ENCODE measurements at regions of chr17 and their contacts with region 1.

Region 1: GRCh38 chr17:78250891-78251794 is 19.7 kb downstream of the TMEM235 start:
- DNase-seq: peak; percentile 89
- ATAC-seq: peak; percentile 69
- H3K4me3 ChIP-seq: no peak overlapping the region
- H3K4me3 Mint-ChIP-seq: peak overlapping the region; percentile 57
- H3K27ac ChIP-seq: no peak overlapping the region
- H3K27ac Mint-ChIP-seq: peak overlapping the region; percentile 59
- H3K4me1 ChIP-seq: peaks cover 33 to 40% of the 10 kb centered on the region in 2 donors
- H3K4me1 Mint-ChIP-seq: peaks cover 33% of the 10 kb centered on the region
- H3K27me3 ChIP-seq: no peaks in the 10 kb centered on the region
- H3K27me3 Mint-ChIP-seq: no peaks in the 10 kb centered on the region
- CTCF ChIP-seq: peak; percentile 100

Region 2: GRCh38 chr17:78082988-78083387 is 168.2 kb before region 1 on chr17:
- CTCF ChIA-PET with region 1: interaction called, 47 read pairs
- POLR2A ChIA-PET with region 1: no interaction called
- intact Hi-C with region 1: loop called (anchors 1 kb)
- DNase-seq: no peak
- ATAC-seq: no peak
- H3K4me3 ChIP-seq: no peak overlapping the region
- H3K4me3 Mint-ChIP-seq: no peak overlapping the region
- H3K27ac ChIP-seq: no peak overlapping the region
- H3K27ac Mint-ChIP-seq: no peak overlapping the region
- H3K4me1 ChIP-seq: no peaks in the 10 kb centered on the region
- H3K4me1 Mint-ChIP-seq: no peaks in the 10 kb centered on the region
- H3K27me3 ChIP-seq: no peaks in the 10 kb centered on the region
- H3K27me3 Mint-ChIP-seq: no peaks in the 10 kb centered on the region
- CTCF ChIP-seq: no peak

Region 3: DNA sequence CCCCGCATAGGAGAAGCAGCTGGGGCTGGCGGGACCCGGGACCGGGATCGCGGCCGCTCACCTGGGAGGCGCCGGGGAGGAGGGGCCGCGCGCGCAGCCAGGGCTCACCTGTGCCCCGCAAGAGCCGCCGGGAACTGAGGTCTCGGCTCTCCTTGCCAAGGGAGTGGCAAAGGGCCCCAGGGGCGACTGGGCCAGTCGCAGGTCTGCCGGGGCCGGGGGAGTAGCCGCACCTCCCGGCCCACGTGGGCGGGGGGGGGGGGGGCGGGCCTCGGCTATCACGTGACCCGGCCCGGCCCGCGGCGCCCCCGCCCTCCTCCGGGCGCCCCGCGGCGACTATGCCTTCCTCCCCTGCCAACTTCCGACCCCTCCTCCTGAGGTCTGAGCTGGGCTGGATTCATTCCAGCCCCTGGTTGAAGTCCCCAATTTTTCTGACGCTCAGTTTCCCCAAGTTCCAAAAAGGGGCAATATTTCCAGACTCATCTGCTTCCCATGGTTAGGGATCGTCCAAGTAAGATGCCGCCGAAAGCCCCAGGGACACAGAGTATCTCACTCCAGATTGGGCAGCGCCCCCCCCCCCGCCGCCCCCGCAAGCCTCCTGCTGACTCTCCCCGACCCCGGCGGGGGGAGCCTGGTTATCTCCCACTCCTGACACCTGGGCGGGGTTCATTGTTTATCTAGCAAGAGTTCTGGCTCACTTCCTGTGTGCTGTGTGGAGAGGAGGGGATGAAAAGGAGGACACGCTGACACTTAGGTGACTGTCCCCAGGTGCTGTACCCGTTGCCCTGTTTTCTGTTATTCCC is 122.4 kb before region 1 on chr17 and contains the start of gene TMC6:
- CTCF ChIA-PET with region 1: interaction called, 30 read pairs
- POLR2A ChIA-PET with region 1: interaction called, 7 read pairs
- intact Hi-C with region 1: loop called (anchors 5 kb)
- DNase-seq: peak; percentile 88
- ATAC-seq: peak; percentile 21
- H3K4me3 ChIP-seq: peak within 1 kb of the TSS; percentile 38 to 97 (median 89)
- H3K4me3 Mint-ChIP-seq: peak within 1 kb of the TSS; percentile 96
- H3K27ac ChIP-seq: peak within 1 kb of the TSS; percentile 88 to 92
- H3K27ac Mint-ChIP-seq: peak within 1 kb of the TSS; percentile 99
- H3K4me1 ChIP-seq: peaks cover 68 to 80% of the 10 kb centered on the region in 2 donors
- H3K4me1 Mint-ChIP-seq: peaks cover 73% of the 10 kb centered on the region
- H3K27me3 ChIP-seq: no peaks in the 10 kb centered on the region
- H3K27me3 Mint-ChIP-seq: no peaks in the 10 kb centered on the region
- CTCF ChIP-seq: no peak
- total RNA-seq, gene TMC6: 891 and 910 TPM in 2 replicates

Region 4: DNA sequence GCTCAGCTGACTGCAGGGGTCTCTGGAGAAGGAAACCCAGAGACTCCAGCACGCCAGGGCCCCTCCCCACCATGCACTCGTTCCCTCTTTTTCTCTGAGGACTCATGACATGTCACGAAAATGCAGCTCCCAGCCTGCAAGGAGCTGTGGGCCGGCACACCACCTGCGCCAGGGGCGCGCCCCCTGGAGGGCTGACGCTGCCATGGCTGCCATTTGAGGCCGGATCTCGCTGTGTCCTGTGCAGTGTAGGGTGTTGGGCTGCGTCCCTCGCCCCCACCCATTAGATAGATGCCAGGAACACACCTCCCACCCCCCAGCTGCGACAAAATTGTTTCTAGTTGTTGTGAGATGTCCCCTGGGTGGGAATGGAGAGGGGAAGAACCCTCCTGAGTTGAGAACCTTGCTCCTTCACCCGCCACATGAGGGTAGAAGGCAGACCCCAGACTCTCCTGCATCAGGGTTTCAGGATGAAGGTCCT is 74.6 kb before region 1 on chr17:
- CTCF ChIA-PET with region 1: interaction called, 10 read pairs
- POLR2A ChIA-PET with region 1: no interaction called
- intact Hi-C with region 1: no loop called
- DNase-seq: peak; percentile 87
- ATAC-seq: peak; percentile 59
- H3K4me3 ChIP-seq: no peak overlapping the region
- H3K4me3 Mint-ChIP-seq: peak overlapping the region; percentile 44
- H3K27ac ChIP-seq: no peak overlapping the region
- H3K27ac Mint-ChIP-seq: peak overlapping the region; percentile 89
- H3K4me1 ChIP-seq: peaks cover 66 to 67% of the 10 kb centered on the region in 2 donors
- H3K4me1 Mint-ChIP-seq: peaks cover 78% of the 10 kb centered on the region
- H3K27me3 ChIP-seq: no peaks in the 10 kb centered on the region
- H3K27me3 Mint-ChIP-seq: no peaks in the 10 kb centered on the region
- CTCF ChIP-seq: peak; percentile 93

Region 5: GRCh38 chr17:78214706-78215061 is 36.5 kb before region 1 on chr17:
- CTCF ChIA-PET with region 1: interaction called, 3 read pairs
- POLR2A ChIA-PET with region 1: no interaction called
- intact Hi-C with region 1: loop called (anchors 1 kb)
- DNase-seq: no peak
- ATAC-seq: no peak
- H3K4me3 ChIP-seq: peak overlapping the region in 2 of 5 experiments; percentile 43 to 60
- H3K4me3 Mint-ChIP-seq: peak overlapping the region; percentile 79
- H3K27ac ChIP-seq: no peak overlapping the region
- H3K27ac Mint-ChIP-seq: peak overlapping the region; percentile 26
- H3K4me1 ChIP-seq: peaks cover 4 to 8% of the 10 kb centered on the region in 2 donors
- H3K4me1 Mint-ChIP-seq: peaks cover 7% of the 10 kb centered on the region
- H3K27me3 ChIP-seq: no peaks in the 10 kb centered on the region
- H3K27me3 Mint-ChIP-seq: no peaks in the 10 kb centered on the region
- CTCF ChIP-seq: no peak

Region 6: DNA sequence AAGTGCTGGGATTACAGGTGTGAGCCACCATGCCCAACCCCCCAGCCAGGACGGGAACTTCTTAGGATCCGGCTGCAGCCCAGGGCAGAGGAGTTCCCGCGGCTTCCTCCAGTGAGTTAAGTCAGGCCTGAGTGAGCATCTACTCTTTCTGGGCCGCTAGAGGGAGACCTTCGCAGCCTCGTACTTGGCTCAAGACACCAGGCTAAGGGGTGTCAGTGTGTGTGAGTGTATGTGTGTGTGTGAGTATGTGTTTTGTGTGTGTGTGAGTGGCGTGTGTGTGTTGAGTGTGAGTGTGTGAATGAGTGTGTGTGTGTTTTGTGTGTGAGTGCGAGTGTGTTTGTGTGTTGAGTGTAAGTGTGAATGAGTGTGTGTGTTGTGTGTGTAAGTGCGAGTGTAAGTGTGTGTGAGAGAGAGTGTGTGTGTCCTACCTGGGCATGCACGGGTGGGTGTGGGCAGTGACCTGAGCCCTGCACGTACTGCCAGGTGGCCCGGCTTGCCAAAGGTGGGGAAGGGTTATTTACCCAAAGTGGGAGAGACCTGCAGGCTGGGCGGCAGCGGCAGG is 38.7 kb after region 1 on chr17:
- CTCF ChIA-PET with region 1: interaction called, 30 read pairs
- POLR2A ChIA-PET with region 1: no interaction called
- intact Hi-C with region 1: no loop called
- DNase-seq: peak; percentile 89
- ATAC-seq: peak; percentile 98
- H3K4me3 ChIP-seq: no peak overlapping the region
- H3K4me3 Mint-ChIP-seq: no peak overlapping the region
- H3K27ac ChIP-seq: no peak overlapping the region
- H3K27ac Mint-ChIP-seq: no peak overlapping the region
- H3K4me1 ChIP-seq: peaks cover 3 to 10% of the 10 kb centered on the region in 2 donors
- H3K4me1 Mint-ChIP-seq: no peaks in the 10 kb centered on the region
- H3K27me3 ChIP-seq: no peaks in the 10 kb centered on the region
- H3K27me3 Mint-ChIP-seq: no peaks in the 10 kb centered on the region
- CTCF ChIP-seq: peak; percentile 74

Region 7: DNA sequence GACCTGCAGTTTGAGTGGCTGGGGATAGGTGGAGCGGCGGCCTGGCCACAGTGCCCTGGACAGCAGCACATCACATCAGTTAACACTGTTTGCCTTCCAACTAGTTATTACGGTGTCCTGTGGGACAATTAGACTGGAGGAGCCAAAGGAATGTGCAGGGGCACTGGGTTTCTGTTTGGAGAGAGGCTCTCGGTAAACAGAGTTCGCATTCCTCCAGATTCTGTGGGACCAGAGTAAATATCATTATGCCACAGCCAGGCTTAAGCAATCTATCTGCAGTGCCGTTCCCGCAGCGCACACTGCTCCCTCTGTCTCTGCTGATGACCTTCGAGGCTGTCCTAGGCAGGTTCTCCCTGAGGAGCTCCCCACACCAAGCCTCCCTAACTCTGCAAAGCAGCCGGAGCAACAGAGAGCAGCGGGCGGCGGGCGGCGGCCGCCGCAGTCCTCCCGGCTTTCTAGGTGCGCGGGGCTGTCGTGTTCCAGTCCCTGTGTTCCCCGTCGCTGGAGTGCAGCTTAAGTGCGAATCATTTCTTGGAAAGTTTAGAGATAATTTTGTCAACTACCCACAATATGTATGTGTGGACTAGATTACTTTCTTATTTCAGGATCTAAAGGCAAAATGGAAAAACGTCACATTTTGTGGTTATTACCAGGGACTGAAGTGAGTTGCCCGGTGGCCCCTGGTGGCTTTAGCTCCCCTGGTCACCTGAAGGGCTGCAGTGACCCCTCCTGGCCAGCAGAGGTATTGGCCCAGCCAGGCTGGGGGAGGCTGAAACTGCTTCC is 170.5 kb after region 1 on chr17:
- CTCF ChIA-PET with region 1: interaction called, 83 read pairs
- POLR2A ChIA-PET with region 1: no interaction called
- intact Hi-C with region 1: loop called (anchors 1 kb)
- DNase-seq: peak; percentile 82
- ATAC-seq: peak; percentile 96
- H3K4me3 ChIP-seq: no peak overlapping the region
- H3K4me3 Mint-ChIP-seq: no peak overlapping the region
- H3K27ac ChIP-seq: no peak overlapping the region
- H3K27ac Mint-ChIP-seq: no peak overlapping the region
- H3K4me1 ChIP-seq: no peaks in the 10 kb centered on the region
- H3K4me1 Mint-ChIP-seq: peaks cover 1% of the 10 kb centered on the region
- H3K27me3 ChIP-seq: no peaks in the 10 kb centered on the region
- H3K27me3 Mint-ChIP-seq: no peaks in the 10 kb centered on the region
- CTCF ChIP-seq: peak; percentile 99